ENCODE measurements at regions of chr2 and their contacts with region 1.

Region 1: DNA sequence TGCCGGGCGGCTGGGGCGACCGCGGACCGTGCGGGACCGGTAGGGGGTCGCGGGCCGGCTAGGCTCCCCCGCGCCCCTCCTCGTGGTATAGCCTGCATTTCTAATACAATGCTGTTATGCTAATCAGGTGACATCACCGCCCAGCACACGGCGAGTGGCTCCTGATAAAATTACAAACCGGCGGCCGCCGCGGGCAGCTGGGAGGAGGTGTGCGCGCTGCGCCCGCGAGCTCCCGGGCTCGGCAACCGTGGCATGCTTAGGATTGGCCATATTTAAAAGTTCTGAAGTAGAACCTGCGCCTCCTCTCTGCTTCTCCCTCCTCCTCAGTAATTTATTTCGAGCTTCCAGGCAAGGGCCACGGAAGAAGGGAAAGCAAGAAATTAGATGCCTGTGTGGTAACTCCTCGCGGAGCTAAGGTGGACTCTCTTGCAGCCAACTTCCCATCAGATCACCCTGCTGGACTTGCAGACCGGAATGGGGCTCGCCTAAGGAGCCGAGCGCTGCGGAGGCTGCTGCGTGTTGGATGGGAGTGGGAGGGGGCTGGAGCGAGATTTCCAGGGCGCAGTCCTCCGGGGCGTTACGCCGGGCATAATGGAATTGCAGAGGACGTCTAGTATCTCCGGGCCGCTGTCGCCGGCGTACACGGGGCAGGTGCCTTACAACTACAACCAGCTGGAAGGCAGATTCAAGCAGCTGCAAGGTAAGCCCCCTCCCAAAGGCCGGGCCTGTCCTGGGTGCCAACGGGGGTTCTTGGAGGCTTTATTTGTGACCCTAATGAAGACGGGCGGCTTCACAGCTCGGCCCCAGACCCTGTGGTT is 102.3 kb downstream of the SPTBN1 start:
- DNase-seq: peak; percentile 71
- H3K27ac ChIP-seq: peak overlapping the region; percentile 99
- CTCF ChIP-seq: no peak

Region 2: GRCh38 chr2:54667726-54668650 is 109.6 kb after region 1 on chr2:
- CTCF ChIA-PET with region 1: interaction called, 3 read pairs
- POLR2A ChIA-PET with region 1: interaction called, 13 read pairs
- DNase-seq: no peak
- H3K27ac ChIP-seq: peak overlapping the region; percentile 90
- CTCF ChIP-seq: no peak

Measured in RWPE1 (cell line).